Common myeloid progenitor, CD34-positive (primary cell): ENCODE measurements at regions of chr11 and their contacts with region 1.

Region 1: GRCh38 chr11:77619576-77620198 is 17.9 kb downstream of the CLNS1A start:
- DNase-seq: peak; percentile 52 to 69 (median 59)
- H3K4me3 ChIP-seq: no peak overlapping the region
- H3K27ac ChIP-seq: no peak overlapping the region
- H3K4me1 ChIP-seq: no peaks in the 10 kb centered on the region
- H3K27me3 ChIP-seq: no peaks in the 10 kb centered on the region

Region 2: GRCh38 chr11:77198440-77198849 is 421.2 kb before region 1 on chr11:
- CTCF ChIA-PET with region 1: interaction called, 12 read pairs
- POLR2A ChIA-PET with region 1: no interaction called
- DNase-seq: peak; percentile 27 to 46 (median 45)
- H3K4me3 ChIP-seq: no peak overlapping the region
- H3K27ac ChIP-seq: no peak overlapping the region
- H3K4me1 ChIP-seq: peaks cover 0 to 4% (median 0%) of the 10 kb centered on the region in 4 experiments
- H3K27me3 ChIP-seq: no peaks in the 10 kb centered on the region

Region 3: DNA sequence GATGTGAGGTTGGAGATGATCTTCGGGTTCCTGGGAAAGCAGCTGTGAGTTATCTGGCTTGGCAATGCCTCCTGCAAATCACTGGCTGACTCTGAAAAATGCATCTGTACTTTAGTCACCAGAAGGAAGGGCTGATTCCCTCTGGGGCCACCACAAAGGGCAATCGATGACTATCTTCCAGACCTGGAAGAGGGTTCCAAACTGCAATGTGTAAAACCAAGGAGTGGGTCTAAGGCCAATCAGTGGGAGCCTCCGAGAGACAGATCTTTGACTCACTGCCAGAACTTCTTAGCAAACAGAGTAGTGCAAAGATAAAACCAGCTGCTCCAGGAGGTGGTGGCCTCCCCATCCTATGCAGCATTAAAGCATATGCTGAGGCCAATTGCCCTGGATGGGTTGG is 116.7 kb before region 1 on chr11:
- CTCF ChIA-PET with region 1: no interaction called
- POLR2A ChIA-PET with region 1: no interaction called
- DNase-seq: peak in 2 of 3 donors; percentile 34 to 52
- H3K4me3 ChIP-seq: no peak overlapping the region
- H3K27ac ChIP-seq: no peak overlapping the region
- H3K4me1 ChIP-seq: peaks cover 6 to 30% (median 20%) of the 10 kb centered on the region in 4 experiments
- H3K27me3 ChIP-seq: no peaks in the 10 kb centered on the region

Region 4: DNA sequence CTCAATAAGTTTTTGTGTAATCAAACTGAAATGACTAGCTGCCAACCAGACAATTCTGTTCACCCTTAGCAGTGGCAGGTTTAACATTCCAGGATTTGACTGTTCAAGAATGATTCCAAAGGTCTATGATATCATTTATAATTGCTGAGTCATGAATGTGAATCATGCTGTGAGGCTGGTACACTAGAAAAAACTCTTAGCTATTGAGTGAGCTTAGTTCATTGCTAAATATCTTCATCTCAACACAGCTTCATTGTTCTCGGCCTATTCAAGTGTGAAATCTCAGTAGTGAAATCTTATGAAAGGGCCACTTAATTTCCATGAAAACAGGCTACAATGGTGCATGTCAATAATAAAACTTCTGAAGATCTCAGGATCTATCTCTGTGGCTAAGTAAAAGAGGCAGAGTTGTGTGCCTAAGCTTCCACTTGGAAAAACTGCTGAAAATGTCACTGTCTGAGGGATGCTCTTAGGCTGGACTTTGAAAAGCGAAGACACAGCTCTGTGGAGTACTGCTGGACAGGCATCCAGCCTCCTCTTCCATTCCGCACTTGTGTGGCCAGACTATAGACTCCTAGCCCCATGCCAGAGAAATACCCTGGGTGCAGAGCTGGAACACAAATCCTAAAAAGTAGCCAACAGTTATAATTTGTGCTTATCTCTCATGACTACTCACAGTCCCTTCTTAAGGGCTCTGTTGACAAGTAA is 17.2 kb before region 1 on chr11:
- CTCF ChIA-PET with region 1: interaction called, 18 read pairs
- POLR2A ChIA-PET with region 1: interaction called, 3 read pairs
- DNase-seq: peak in 2 of 3 donors; percentile 15 to 40
- H3K4me3 ChIP-seq: no peak overlapping the region
- H3K27ac ChIP-seq: no peak overlapping the region
- H3K4me1 ChIP-seq: no peaks in the 10 kb centered on the region
- H3K27me3 ChIP-seq: no peaks in the 10 kb centered on the region

Region 5: DNA sequence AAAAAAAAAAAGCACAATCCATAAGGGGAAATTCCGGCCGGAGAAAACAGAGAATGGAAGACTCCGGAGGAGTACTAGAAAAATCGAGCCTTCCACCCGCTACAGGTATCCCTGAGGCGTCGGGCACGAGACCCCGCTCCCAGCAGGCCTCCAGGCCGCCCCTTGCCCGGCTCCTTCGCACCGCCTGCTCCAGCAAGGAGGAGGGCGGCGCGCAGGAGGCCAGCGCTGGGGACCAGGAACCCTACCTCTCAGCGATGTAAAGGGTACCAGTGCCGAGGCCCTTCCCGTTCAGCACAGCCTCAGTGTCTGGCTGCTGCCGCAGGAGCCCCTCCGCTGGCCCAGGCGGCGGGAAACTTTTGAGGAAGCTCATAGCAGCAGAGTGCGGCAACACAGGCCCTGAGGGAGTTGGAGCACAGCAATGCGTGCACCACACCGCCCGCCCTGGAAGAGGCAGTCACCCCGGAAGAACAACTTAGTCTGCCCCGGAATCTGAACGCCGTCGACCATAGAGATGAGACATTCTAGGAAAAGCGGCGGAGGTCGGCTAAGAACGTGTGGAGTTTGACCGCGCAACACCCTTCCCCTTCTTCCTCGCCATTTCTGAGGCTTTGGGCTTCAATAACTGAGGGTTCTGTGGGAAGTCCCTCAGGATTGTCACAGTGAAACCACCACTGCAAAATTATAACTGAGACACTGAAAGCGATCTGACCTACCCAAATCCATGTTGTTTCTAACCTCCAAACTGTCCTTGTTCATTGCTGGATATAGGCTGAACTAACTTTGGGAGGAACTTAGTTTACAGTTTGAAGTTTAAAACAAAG is 17.9 kb after region 1 on chr11 and contains the start of gene CLNS1A:
- CTCF ChIA-PET with region 1: interaction called, 13 read pairs
- POLR2A ChIA-PET with region 1: no interaction called
- DNase-seq: peak; percentile 88 to 92 (median 90)
- H3K4me3 ChIP-seq: peak within 1 kb of the TSS; percentile 64 to 92 (median 86)
- H3K27ac ChIP-seq: peak within 1 kb of the TSS; percentile 44 to 89
- H3K4me1 ChIP-seq: peaks cover 18 to 48% (median 39%) of the 10 kb centered on the region in 4 experiments
- H3K27me3 ChIP-seq: no peaks in the 10 kb centered on the region